ENCODE measurements at regions of chr22 and their contacts with region 1.

Region 1: GRCh38 chr22:40449676-40450035 is 79.3 kb downstream of the SGSM3 start:
- DNase-seq: no peak
- ATAC-seq: no peak
- H3K4me3 ChIP-seq: no peak overlapping the region
- H3K27ac ChIP-seq: peak overlapping the region in 1 of 2 donors; percentile 10
- H3K4me1 ChIP-seq: peaks cover 4 to 11% of the 10 kb centered on the region in 2 donors
- H3K27me3 ChIP-seq: no peaks in the 10 kb centered on the region

Region 2: GRCh38 chr22:40055143-40055883 is 394.3 kb before region 1 on chr22:
- intact Hi-C with region 1: no loop called
- DNase-seq: no peak
- ATAC-seq: no peak
- H3K4me3 ChIP-seq: no peak overlapping the region
- H3K27ac ChIP-seq: no peak overlapping the region
- H3K4me1 ChIP-seq: no peaks in the 10 kb centered on the region
- H3K27me3 ChIP-seq: no peaks in the 10 kb centered on the region

Region 3: DNA sequence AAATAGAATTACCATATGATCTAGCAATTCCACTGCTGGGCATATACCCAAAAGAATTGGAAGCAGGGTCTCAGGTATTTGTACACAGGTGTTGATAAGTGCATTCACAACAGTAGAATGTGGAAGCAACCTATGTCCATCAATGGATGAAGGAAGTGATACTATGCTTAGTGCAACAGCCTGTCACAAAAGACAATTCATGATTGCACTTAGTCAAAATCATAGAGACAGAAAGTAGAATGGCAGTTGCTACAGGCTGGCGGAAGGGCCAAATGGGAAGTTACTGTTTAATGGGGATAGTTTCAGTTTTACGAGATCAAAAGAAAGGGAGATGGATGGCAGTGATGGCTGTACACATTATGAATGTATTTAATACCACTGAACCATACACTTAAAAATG is 37.2 kb before region 1 on chr22:
- intact Hi-C with region 1: no loop called
- DNase-seq: no peak
- ATAC-seq: no peak
- H3K4me3 ChIP-seq: no peak overlapping the region
- H3K27ac ChIP-seq: no peak overlapping the region
- H3K4me1 ChIP-seq: no peaks in the 10 kb centered on the region
- H3K27me3 ChIP-seq: no peaks in the 10 kb centered on the region

Region 4: GRCh38 chr22:40487663-40488249 is 38.1 kb after region 1 on chr22:
- intact Hi-C with region 1: loop called (anchors 5 kb)
- DNase-seq: no peak
- ATAC-seq: no peak
- H3K4me3 ChIP-seq: no peak overlapping the region
- H3K27ac ChIP-seq: no peak overlapping the region
- H3K4me1 ChIP-seq: peaks cover 4 to 14% of the 10 kb centered on the region in 2 donors
- H3K27me3 ChIP-seq: no peaks in the 10 kb centered on the region

Measured in aorta (tissue), 5 donors.